Left ventricle myocardium inferior (tissue), 1 donor: ENCODE measurements at regions of chr5 and their contacts with region 1.

Region 1: GRCh38 chr5:54480296-54480695 is 24.8 kb downstream of the HSPB3 start:
- DNase-seq: no peak
- H3K4me3 ChIP-seq: no peak overlapping the region
- H3K27ac ChIP-seq: no peak overlapping the region
- H3K4me1 ChIP-seq: no peaks in the 10 kb centered on the region
- H3K27me3 ChIP-seq: no peaks in the 10 kb centered on the region
- CTCF ChIP-seq: no peak

Region 2: DNA sequence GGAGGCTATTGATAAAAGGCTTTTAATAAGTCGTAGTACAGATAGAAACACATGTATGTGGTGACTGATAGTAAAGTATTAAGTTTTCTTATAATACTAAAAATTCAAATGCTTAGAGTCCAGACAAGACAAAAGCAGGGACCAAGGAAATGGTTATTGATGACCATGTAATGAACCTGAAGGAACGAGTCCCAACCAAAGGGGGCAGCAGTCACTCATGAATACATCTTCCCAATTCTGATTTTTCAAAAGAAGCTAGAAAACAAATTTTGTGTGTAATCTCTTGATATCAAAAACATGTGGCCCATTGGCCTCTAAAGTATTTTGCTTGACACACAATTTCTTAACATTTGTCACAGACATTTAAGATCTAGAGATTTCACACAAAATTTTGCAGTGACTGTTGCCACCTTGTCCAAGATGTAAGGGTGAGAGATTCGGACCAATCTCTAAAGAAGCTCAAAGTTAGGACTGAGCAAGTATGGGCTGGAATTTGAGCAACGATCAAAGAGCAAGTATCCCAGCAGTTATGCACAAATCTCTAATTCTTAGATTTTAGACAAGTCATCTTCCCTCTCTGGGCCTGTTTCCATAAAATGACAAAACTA is 236.7 kb before region 1 on chr5:
- intact Hi-C with region 1: loop called (anchors 10 kb)
- DNase-seq: no peak
- H3K4me3 ChIP-seq: no peak overlapping the region
- H3K27ac ChIP-seq: no peak overlapping the region
- H3K4me1 ChIP-seq: peaks cover 53% of the 10 kb centered on the region
- H3K27me3 ChIP-seq: no peaks in the 10 kb centered on the region
- CTCF ChIP-seq: peak; percentile 72

Region 3: GRCh38 chr5:55176176-55176818 is 696.0 kb after region 1 on chr5:
- intact Hi-C with region 1: no loop called
- DNase-seq: peak; percentile 24
- H3K4me3 ChIP-seq: peak overlapping the region; percentile 54
- H3K27ac ChIP-seq: no peak overlapping the region
- H3K4me1 ChIP-seq: peaks cover 29% of the 10 kb centered on the region
- H3K27me3 ChIP-seq: peaks cover 96% of the 10 kb centered on the region
- CTCF ChIP-seq: peak; percentile 61